ENCODE measurements at regions of chr20 and their contacts with region 1.

Region 1: GRCh38 chr20:53763707-53764414 is 170.2 kb upstream of the ZNF217 start:
- DNase-seq: peak; percentile 95 to 97
- H3K4me3 ChIP-seq: peak overlapping the region; percentile 26
- H3K4me3 Mint-ChIP-seq: peak overlapping the region; percentile 82
- H3K27ac Mint-ChIP-seq: peak overlapping the region; percentile 99
- H3K4me1 ChIP-seq: peaks cover 61% of the 10 kb centered on the region
- H3K4me1 Mint-ChIP-seq: peaks cover 55% of the 10 kb centered on the region
- H3K27me3 ChIP-seq: no peaks in the 10 kb centered on the region
- H3K27me3 Mint-ChIP-seq: no peaks in the 10 kb centered on the region
- CTCF ChIP-seq: peak; percentile 33 to 35

Region 2: GRCh38 chr20:53513301-53514298 is 250.3 kb before region 1 on chr20:
- CTCF ChIA-PET with region 1: no interaction called
- POLR2A ChIA-PET with region 1: no interaction called
- intact Hi-C with region 1: loop called (anchors 10 kb)
- DNase-seq: peak; percentile 97 to 98
- H3K4me3 ChIP-seq: peak overlapping the region; percentile 24; the same call in 1 of the 2 replicates
- H3K4me3 Mint-ChIP-seq: peak overlapping the region; percentile 61
- H3K27ac Mint-ChIP-seq: peak overlapping the region; percentile 96
- H3K4me1 ChIP-seq: peaks cover 47% of the 10 kb centered on the region
- H3K4me1 Mint-ChIP-seq: peaks cover 50% of the 10 kb centered on the region
- H3K27me3 ChIP-seq: no peaks in the 10 kb centered on the region
- H3K27me3 Mint-ChIP-seq: no peaks in the 10 kb centered on the region
- CTCF ChIP-seq: no peak

Region 3: GRCh38 chr20:53623454-53624211 is 140.2 kb before region 1 on chr20:
- CTCF ChIA-PET with region 1: interaction called, 9 read pairs
- POLR2A ChIA-PET with region 1: interaction called, 6 read pairs
- intact Hi-C with region 1: loop called (anchors 1 kb)
- DNase-seq: peak; percentile 86 to 89
- H3K4me3 ChIP-seq: peak overlapping the region; percentile 41
- H3K4me3 Mint-ChIP-seq: peak overlapping the region; percentile 83
- H3K27ac Mint-ChIP-seq: peak overlapping the region; percentile 97
- H3K4me1 ChIP-seq: peaks cover 33% of the 10 kb centered on the region
- H3K4me1 Mint-ChIP-seq: peaks cover 24% of the 10 kb centered on the region
- H3K27me3 ChIP-seq: no peaks in the 10 kb centered on the region
- H3K27me3 Mint-ChIP-seq: no peaks in the 10 kb centered on the region
- CTCF ChIP-seq: peak in 1 of 2 experiments; percentile 35

Region 4: DNA sequence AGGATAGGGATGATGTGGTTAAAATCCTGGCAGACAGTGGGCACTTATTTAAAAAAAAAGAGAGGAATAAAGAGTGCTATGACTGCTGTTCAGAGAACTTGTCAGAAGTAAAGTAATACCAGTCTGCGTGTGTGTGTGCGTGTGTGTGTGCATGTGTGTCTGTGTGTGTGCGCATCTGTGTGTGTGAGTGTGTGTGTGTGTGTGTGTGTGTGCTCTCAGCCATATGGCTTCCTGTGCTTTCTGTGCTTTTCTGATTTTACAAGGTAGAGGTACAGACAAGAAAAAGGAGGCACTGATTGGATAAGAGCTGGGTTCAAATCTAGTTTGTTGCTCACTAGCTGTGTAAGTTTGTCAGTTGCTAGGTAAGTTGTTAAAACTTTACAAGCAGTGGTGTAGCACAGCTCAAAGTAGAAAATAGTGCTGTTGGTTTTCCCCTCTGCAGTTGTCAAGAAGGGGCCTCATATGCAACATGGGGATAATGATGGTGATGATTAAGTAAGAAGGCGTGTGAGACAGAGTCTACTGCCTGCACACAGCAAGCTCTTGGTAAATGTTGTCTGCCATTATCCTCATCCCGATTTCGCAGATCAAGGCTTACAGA is 14.9 kb before region 1 on chr20:
- CTCF ChIA-PET with region 1: interaction called, 7 read pairs
- POLR2A ChIA-PET with region 1: interaction called, 8 read pairs
- intact Hi-C with region 1: loop called (anchors 1 kb)
- DNase-seq: no peak
- H3K4me3 ChIP-seq: no peak overlapping the region
- H3K4me3 Mint-ChIP-seq: no peak overlapping the region
- H3K27ac Mint-ChIP-seq: peak overlapping the region; percentile 91
- H3K4me1 ChIP-seq: peaks cover 55% of the 10 kb centered on the region
- H3K4me1 Mint-ChIP-seq: peaks cover 56% of the 10 kb centered on the region
- H3K27me3 ChIP-seq: no peaks in the 10 kb centered on the region
- H3K27me3 Mint-ChIP-seq: no peaks in the 10 kb centered on the region
- CTCF ChIP-seq: no peak

Region 5: DNA sequence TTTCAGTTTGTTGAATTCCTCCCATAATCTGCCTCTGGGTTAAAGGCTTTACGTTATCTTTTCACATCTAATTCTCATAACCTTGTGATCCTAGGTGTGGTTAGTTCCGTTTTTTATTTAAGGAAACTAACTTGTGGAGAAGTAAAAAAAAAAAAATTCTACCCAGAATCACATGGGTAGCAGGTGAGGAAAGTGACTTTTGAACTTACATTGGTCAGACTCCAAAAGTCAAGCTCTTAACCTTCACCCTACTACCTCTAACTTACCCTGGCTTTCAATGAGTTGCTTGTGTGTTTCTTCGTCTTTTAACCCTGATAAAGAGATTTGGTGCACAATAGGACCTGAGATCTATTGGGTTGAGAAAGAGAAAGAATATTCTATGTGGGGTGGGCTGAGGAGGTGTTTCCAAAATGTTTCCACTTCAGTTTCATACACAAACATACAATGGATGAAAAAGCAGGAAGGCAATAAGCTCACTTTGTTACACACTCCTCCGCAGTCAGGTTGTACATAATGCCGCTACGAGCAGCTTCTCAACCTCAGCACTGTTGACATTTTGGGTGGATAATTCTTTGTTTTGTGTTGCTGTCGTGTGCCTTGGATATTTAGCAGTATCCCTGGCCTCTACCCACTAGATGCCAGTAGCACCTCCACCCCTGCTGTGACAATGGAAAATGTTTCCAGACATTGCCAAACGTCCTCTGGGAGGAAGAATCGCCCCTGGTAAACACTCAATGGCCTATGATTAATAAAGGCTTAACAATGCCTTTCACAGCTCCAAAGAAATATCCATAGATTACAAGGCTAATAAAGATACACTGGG is 22.8 kb after region 1 on chr20:
- CTCF ChIA-PET with region 1: interaction called, 18 read pairs
- POLR2A ChIA-PET with region 1: interaction called, 6 read pairs
- intact Hi-C with region 1: loop called (anchors 1 kb)
- DNase-seq: peak; percentile 47 to 67
- H3K4me3 ChIP-seq: no peak overlapping the region; the same call in 1 of the 2 replicates
- H3K4me3 Mint-ChIP-seq: peak overlapping the region; percentile 39
- H3K27ac Mint-ChIP-seq: peak overlapping the region; percentile 59
- H3K4me1 ChIP-seq: peaks cover 71% of the 10 kb centered on the region
- H3K4me1 Mint-ChIP-seq: peaks cover 70% of the 10 kb centered on the region
- H3K27me3 ChIP-seq: no peaks in the 10 kb centered on the region
- H3K27me3 Mint-ChIP-seq: no peaks in the 10 kb centered on the region
- CTCF ChIP-seq: peak in 1 of 2 experiments; percentile 13

Region 6: GRCh38 chr20:53828682-53829254 is 64.9 kb after region 1 on chr20:
- CTCF ChIA-PET with region 1: interaction called, 3 read pairs
- POLR2A ChIA-PET with region 1: interaction called, 3 read pairs
- intact Hi-C with region 1: loop called (anchors 2 kb)
- DNase-seq: peak in 1 of 2 experiments; percentile 47
- H3K4me3 ChIP-seq: 0 out of 2 replicates have a peak overlapping the region, but pooled peaks have one; percentile 8
- H3K4me3 Mint-ChIP-seq: peak overlapping the region; percentile 65
- H3K27ac Mint-ChIP-seq: peak overlapping the region; percentile 81
- H3K4me1 ChIP-seq: peaks cover 35% of the 10 kb centered on the region
- H3K4me1 Mint-ChIP-seq: peaks cover 45% of the 10 kb centered on the region
- H3K27me3 ChIP-seq: no peaks in the 10 kb centered on the region
- H3K27me3 Mint-ChIP-seq: no peaks in the 10 kb centered on the region
- CTCF ChIP-seq: peak in 1 of 2 experiments; percentile 41